ENCODE measurements at regions of chr11 and their contacts with region 1.

Region 1: DNA sequence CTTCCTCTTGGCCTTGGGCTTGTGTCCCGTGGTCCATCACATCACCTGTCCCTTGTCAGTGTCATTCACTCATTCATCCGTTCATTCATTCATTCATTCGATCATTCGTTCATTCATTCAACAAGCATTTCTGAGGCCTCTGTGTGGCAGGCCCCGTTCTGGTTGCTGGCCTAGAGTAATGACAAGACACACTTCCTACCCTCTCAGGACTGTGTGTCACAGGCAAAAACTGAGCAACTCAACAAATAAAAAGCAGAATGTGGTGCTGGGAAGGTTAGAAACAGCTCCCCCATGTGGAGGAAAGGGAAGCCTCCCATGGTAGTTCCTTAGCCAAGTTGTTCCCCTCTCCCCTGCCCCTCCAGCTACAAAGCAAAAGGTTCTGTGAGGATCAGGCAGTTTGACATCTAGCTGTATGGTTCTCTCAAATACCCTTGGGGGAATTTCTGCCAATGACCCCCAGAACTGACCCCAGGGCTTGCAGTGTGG is 1.5 kb upstream of the OMP start:
- DNase-seq: no peak
- H3K4me3 ChIP-seq: no peak overlapping the region
- CTCF ChIP-seq: no peak
- POLR2A ChIP-seq: no peak

Region 2: GRCh38 chr11:76721755-76722677 is 379.1 kb before region 1 on chr11:
- intact Hi-C with region 1: loop called (anchors 10 kb)
- DNase-seq: peak; percentile 81 to 98
- H3K4me3 ChIP-seq: no peak overlapping the region
- CTCF ChIP-seq: no peak
- POLR2A ChIP-seq: no peak

Region 3: DNA sequence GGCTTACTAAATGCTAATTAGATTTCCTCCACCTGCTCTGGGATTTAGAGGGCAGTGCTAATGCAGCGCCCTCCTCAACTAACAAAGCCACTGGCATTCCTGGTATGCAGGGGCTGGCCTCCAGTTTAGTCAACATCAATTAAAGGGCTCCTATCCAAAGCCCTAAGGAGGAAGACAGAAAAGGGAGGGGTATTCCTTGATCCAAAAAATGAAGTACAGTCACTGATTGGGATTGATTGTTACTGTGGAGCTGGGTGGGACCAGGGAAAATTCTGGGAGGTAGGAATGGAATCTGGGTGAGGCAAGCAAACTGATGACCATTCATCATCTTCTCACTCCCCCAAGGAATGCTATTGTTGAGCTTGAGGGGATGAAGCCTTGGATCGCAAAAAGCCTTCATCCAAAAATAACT is 1264.3 kb after region 1 on chr11:
- intact Hi-C with region 1: loop called (anchors 5 kb)
- DNase-seq: no peak
- H3K4me3 ChIP-seq: no peak overlapping the region
- CTCF ChIP-seq: no peak
- POLR2A ChIP-seq: no peak